Right cardiac atrium (tissue), 5 donors: ENCODE measurements at regions of chr4 and their contacts with region 1.

Region 1: DNA sequence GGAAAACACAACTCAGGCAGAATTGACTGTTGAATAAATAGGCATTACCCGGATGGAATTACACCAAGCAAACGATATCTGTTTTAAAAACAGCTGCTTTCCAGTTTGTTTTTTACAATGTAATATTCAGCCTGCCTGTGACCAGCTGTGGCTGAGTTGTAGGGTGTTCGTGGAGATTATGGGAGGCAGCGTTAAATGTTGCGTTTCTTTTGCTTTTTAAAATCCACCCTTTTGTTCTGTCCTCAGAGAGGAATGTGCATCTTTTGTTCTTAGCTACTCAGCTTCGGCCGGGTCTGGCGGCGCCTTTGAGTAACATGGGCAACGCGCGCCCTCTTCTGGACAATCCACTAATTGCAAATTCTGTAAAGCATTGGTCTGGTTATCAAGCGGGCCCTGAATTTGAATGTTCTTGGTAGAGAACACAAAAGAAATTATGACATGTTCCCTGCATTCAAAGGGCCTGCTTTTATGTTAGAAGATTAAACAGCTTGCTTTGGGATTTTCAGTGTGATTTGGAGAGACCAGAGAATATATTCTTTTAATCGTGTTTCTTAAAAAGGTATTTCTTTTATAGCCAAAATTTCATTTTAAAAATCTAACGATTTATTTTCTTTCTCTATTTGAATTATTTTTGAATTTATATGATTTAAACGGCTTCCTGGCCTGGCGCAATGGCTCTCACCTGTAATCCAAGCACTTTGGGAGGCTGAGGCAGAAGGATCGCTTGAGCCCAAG is 76.3 kb upstream of the TRIM2 start:
- DNase-seq: peak; percentile 76 to 86 (median 81)
- ATAC-seq: peak; percentile 86 to 88
- H3K4me3 ChIP-seq: peak overlapping the region; percentile 13
- H3K27ac ChIP-seq: no peak overlapping the region
- H3K4me1 ChIP-seq: no peaks in the 10 kb centered on the region
- H3K27me3 ChIP-seq: no peaks in the 10 kb centered on the region

Region 2: GRCh38 chr4:152843481-152844090 is 284.3 kb before region 1 on chr4:
- intact Hi-C with region 1: loop called in 2 of 4 experiments (anchors 5 to 10 kb)
- DNase-seq: no peak
- ATAC-seq: no peak
- H3K4me3 ChIP-seq: no peak overlapping the region
- H3K27ac ChIP-seq: no peak overlapping the region
- H3K4me1 ChIP-seq: peaks cover 4% of the 10 kb centered on the region
- H3K27me3 ChIP-seq: no peaks in the 10 kb centered on the region

Region 3: GRCh38 chr4:152849350-152849749 is 278.6 kb before region 1 on chr4:
- intact Hi-C with region 1: loop called in 2 of 4 experiments (anchors 5 to 10 kb)
- DNase-seq: no peak
- ATAC-seq: no peak
- H3K4me3 ChIP-seq: no peak overlapping the region
- H3K27ac ChIP-seq: no peak overlapping the region
- H3K4me1 ChIP-seq: peaks cover 2% of the 10 kb centered on the region
- H3K27me3 ChIP-seq: no peaks in the 10 kb centered on the region

Region 4: GRCh38 chr4:153067380-153067779 is 60.5 kb before region 1 on chr4:
- intact Hi-C with region 1: no loop called
- DNase-seq: no peak
- ATAC-seq: no peak
- H3K4me3 ChIP-seq: no peak overlapping the region
- H3K27ac ChIP-seq: no peak overlapping the region
- H3K4me1 ChIP-seq: no peaks in the 10 kb centered on the region
- H3K27me3 ChIP-seq: no peaks in the 10 kb centered on the region

Region 5: DNA sequence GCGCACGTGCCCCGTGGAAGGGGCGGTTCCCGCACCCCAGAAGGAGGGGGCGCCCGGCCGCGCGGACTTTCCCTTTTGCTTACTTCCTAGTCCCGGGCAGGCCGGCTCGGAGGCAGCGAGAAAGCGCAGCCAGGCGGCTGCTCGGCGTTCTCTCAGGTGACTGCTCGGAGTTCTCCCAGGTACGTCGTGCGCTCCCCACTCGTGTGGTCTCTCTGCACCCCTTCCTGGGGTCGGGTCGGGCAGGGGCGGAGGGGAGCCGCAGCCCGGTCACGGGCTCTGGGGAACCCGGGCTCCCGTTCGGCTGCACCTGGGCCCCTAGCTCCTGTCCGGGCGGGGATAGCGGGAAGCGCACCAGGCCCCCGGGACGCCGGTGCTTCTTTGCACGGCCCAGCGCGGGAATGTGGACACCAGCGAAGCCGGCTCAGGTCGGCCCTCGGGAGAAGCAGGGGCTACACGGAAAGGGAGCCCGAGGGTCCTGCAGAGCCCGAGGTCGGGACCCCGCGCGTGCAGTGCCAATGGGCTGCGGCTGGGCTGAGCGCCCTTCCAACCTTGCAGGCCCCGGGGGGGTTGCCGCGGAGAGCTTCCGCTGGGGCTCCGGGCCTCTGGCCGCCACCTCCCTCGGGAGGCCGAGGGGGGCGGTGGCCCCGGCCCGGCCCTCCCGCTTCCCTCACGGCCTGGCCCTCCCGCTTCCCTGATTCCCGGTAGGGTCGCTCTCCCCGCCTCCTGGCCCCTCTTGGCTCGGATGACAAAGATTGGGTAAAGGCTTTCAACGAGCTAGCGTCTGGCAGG is 556.4 kb after region 1 on chr4 and contains the start of gene TLR2:
- intact Hi-C with region 1: no loop called
- DNase-seq: peak; percentile 56 to 90 (median 84)
- ATAC-seq: peak; percentile 91 to 93
- H3K4me3 ChIP-seq: peak within 1 kb of the TSS; percentile 67
- H3K27ac ChIP-seq: no peak within 1 kb of the TSS
- H3K4me1 ChIP-seq: no peaks in the 10 kb centered on the region
- H3K27me3 ChIP-seq: no peaks in the 10 kb centered on the region
- total RNA-seq, gene TLR2: 3.1 to 15.1 (median 10.2) TPM